HepG2 (cell line): ENCODE measurements at regions of chr9 and their contacts with region 1.

Region 1: GRCh38 chr9:92723299-92723625 is 41.4 kb downstream of the BICD2 start:
- DNase-seq: no peak
- ATAC-seq: no peak
- H3K4me3 ChIP-seq: no peak overlapping the region
- H3K27ac ChIP-seq: no peak overlapping the region
- H3K4me1 ChIP-seq: peaks cover 13% of the 10 kb centered on the region; the same call in 1 of the 2 replicates
- H3K27me3 ChIP-seq: no peaks in the 10 kb centered on the region
- CTCF ChIP-seq: no peak
- EP300 ChIP-seq: no peak
- POLR2A ChIP-seq: no peak
- RAD21 ChIP-seq: no peak

Region 2: DNA sequence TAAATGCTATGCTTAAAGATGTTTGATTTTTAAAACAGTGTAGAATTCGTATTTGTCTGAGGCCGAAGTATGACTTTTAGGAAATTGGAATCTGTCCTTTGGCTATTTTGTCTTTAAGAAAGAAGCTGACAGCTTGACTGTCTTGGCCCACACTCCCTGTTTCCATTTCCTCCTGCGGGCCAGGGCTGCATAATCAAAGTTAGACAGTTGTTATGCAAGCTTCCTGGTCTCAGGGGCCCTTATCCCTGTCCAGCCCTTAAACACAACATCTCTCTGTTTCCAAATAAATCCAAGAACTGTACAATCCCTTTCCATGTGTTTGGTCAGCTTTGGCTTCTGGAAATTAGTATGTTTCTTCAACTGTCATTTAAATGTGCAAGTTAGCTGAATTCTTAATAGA is 132.9 kb before region 1 on chr9:
- CTCF ChIA-PET with region 1: no interaction called
- POLR2A ChIA-PET with region 1: no interaction called
- in situ Hi-C with region 1: no loop called
- intact Hi-C with region 1: no loop called
- DNase-seq: no peak
- ATAC-seq: no peak
- H3K4me3 ChIP-seq: no peak overlapping the region
- H3K27ac ChIP-seq: no peak overlapping the region
- H3K4me1 ChIP-seq: peaks cover 6% of the 10 kb centered on the region
- H3K27me3 ChIP-seq: no peaks in the 10 kb centered on the region
- CTCF ChIP-seq: no peak
- EP300 ChIP-seq: no peak
- POLR2A ChIP-seq: no peak
- RAD21 ChIP-seq: no peak

Region 3: GRCh38 chr9:92654481-92655301 is 68.6 kb before region 1 on chr9:
- CTCF ChIA-PET with region 1: no interaction called
- POLR2A ChIA-PET with region 1: no interaction called
- in situ Hi-C with region 1: no loop called
- intact Hi-C with region 1: no loop called
- DNase-seq: no peak
- ATAC-seq: no peak
- H3K4me3 ChIP-seq: no peak overlapping the region
- H3K27ac ChIP-seq: no peak overlapping the region
- H3K4me1 ChIP-seq: no peaks in the 10 kb centered on the region
- H3K27me3 ChIP-seq: no peaks in the 10 kb centered on the region
- CTCF ChIP-seq: no peak
- EP300 ChIP-seq: no peak
- POLR2A ChIP-seq: no peak
- RAD21 ChIP-seq: no peak

Region 4: GRCh38 chr9:92738661-92739081 is 15.4 kb after region 1 on chr9:
- CTCF ChIA-PET with region 1: no interaction called
- POLR2A ChIA-PET with region 1: no interaction called
- in situ Hi-C with region 1: no loop called
- intact Hi-C with region 1: loop called (anchors 1 kb)
- DNase-seq: no peak
- ATAC-seq: no peak
- H3K4me3 ChIP-seq: no peak overlapping the region
- H3K27ac ChIP-seq: no peak overlapping the region
- H3K4me1 ChIP-seq: 0 out of 2 replicates have a peak, but pooled peaks cover 11% of the 10 kb centered on the region
- H3K27me3 ChIP-seq: no peaks in the 10 kb centered on the region
- CTCF ChIP-seq: no peak
- EP300 ChIP-seq: no peak
- POLR2A ChIP-seq: no peak
- RAD21 ChIP-seq: no peak